H1 (cell line): ENCODE measurements at regions of chr9 and their contacts with region 1.

Region 1: GRCh38 chr9:110217656-110218099 is 9.7 kb upstream of the C9orf152 start:
- DNase-seq: no peak
- H3K4me3 ChIP-seq: no peak overlapping the region
- H3K27ac ChIP-seq: no peak overlapping the region
- H3K4me1 ChIP-seq: no peaks in the 10 kb centered on the region
- H3K27me3 ChIP-seq: no peaks in the 10 kb centered on the region
- CTCF ChIP-seq: peak in 2 of 3 experiments; percentile 41 to 74; a peak in 2 of 4 replicates
- EP300 ChIP-seq: no peak
- POLR2A ChIP-seq: no peak
- RAD21 ChIP-seq: peak; percentile 46 to 61

Region 2: DNA sequence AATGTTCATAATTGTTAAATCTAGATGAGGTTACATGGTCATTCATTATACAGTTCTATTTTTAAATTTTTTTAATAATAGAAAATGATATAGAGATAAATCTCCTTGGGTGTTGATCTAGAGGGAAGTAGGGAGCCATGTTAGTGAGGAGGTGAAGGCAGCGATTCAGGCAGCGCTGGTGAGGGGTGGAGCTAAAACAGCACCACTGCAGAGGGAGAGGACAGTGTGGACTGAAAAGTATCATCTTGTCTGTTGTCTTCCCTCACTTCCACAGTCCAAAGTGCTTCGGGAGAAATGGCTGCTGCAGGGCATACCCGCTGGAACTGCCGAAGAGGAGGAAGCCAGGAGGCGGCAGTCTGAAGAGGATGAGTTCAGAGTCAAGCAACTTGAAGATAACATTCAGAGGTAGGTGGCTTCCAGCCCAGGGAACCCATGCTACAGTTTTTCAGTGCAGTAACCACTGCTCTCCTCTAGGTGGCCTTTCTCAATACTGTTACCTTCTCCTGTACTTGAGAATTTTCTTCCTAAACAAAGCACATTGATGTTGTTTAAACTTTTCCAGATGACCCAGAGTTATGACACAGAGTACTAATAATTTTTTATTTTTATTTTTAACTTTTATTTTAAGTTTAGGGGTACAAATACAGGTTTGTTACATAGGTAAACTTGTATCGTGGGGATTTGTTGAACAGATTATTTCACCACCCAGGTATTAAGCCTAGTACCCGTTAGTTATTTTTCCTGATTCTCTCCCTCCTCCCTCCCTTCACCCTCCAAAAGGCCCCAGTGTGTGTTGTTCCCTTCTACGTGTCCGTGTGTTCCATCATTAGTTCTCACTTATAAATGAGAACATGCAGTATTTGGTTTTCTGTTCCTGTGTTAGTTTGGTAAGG is 337.2 kb before region 1 on chr9:
- CTCF ChIA-PET with region 1: no interaction called
- POLR2A ChIA-PET with region 1: no interaction called
- DNase-seq: peak; percentile 39 to 72
- H3K4me3 ChIP-seq: no peak overlapping the region
- H3K27ac ChIP-seq: no peak overlapping the region
- H3K4me1 ChIP-seq: peaks cover 0 to 4% (median 0%) of the 10 kb centered on the region in 4 experiments; a peak in 3 of 7 replicates
- H3K27me3 ChIP-seq: no peaks in the 10 kb centered on the region
- CTCF ChIP-seq: peak in 2 of 3 experiments; percentile 48 to 78; a peak in 3 of 4 replicates
- EP300 ChIP-seq: no peak
- POLR2A ChIP-seq: no peak
- RAD21 ChIP-seq: peak; percentile 38 to 46; a peak in 3 of 4 replicates

Region 3: DNA sequence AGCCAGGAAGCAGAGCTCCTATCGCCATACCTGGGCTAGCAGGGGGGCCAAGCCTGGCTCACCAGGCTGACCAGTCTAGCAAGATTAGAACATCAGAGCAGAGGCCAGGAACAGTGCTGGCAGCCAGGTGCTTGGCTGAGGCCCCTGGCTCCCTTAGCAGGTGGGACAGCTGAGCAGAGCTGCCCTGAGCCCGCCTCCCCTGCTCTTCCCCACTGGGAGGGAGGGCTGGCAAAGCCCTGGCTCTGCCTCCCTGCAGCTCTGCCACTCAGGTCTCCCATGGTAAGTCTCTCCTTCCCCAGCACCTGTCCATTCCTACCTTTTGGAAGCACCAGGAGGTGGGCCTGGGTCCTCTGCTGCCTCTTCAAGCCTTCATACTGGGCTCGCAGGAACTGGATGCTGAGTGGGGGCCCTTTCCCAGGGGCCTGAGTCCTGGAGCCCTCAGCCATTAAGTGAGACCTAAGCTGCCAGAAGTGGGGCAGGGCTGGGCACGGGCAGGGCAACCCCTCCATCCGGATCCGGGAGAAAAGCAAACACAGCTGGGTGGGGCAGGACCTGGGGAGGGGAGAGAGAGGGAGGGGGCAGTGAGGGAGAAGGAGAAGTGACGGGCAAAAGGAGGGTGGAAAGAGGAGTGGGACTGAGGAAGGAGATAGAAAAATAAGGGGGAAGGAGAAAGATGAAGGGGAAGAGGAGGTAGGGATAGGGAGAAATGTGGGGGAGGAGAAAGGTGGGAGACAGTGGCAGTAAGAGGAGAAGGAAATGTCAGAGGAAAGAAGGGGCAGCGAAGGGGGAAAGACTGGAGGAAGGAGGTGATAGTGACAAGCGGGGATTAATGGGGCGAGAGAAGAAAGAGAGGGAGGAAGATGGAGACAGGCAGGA is 10.4 kb before region 1 on chr9:
- CTCF ChIA-PET with region 1: interaction called, 42 read pairs
- POLR2A ChIA-PET with region 1: no interaction called
- DNase-seq: no peak
- H3K4me3 ChIP-seq: no peak overlapping the region
- H3K27ac ChIP-seq: no peak overlapping the region
- H3K4me1 ChIP-seq: peaks cover 0 to 3% (median 0%) of the 10 kb centered on the region in 4 experiments; a peak in 2 of 7 replicates
- H3K27me3 ChIP-seq: no peaks in the 10 kb centered on the region
- CTCF ChIP-seq: no peak
- EP300 ChIP-seq: no peak
- POLR2A ChIP-seq: no peak
- RAD21 ChIP-seq: no peak

Region 4: DNA sequence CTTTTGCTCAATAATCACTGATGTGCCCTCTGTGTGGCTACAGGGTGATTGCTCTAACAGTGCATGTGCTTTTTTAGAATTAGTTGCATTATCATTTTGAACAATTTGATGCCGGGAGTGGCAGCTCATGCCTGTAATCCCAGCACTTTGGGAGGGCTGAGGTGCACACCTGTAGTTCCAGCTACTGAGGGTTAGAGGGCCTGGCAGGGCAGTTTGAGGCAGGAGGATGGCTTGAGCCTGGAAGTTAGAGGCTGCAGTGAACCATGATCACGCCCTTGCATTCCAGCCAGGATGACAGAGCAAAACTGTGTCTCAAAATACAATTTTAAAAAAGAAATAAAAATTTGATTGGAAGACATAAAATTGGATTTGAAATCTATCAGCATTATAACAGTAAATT is 11.3 kb after region 1 on chr9:
- CTCF ChIA-PET with region 1: interaction called, 20 read pairs
- POLR2A ChIA-PET with region 1: no interaction called
- DNase-seq: no peak
- H3K4me3 ChIP-seq: no peak overlapping the region
- H3K27ac ChIP-seq: no peak overlapping the region
- H3K4me1 ChIP-seq: no peaks in the 10 kb centered on the region
- H3K27me3 ChIP-seq: no peaks in the 10 kb centered on the region
- CTCF ChIP-seq: peak in 1 of 3 experiments; percentile 3; a peak in 1 of 4 replicates
- EP300 ChIP-seq: no peak
- POLR2A ChIP-seq: no peak
- RAD21 ChIP-seq: peak in 1 of 2 experiments; percentile 11; a peak in 1 of 4 replicates